ENCODE measurements at regions of chr4 and their contacts with region 1.

Region 1: DNA sequence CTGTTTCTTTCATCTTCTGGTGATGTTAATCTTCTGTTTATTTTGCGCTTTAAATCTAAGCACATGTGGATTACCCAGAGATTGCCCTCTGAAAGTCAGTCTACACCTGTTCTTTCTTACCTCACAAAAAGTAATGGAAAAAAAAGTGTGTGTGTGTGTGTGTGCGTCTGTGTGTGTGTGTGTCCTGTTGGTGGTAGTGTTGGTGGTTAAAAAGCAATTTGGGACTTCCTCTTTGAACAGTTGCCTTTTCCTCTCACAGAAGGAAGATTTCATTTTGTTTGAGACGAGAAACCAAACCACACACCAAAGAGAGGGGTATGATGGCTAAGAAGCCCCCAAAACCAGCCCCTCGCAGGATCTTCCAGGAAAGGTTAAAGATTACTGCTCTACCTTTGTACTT is at the start of gene STAP1:
- DNase-seq: no peak
- ATAC-seq: peak; percentile 76
- H3K4me3 ChIP-seq: peak within 1 kb of the TSS; percentile 55
- H3K27ac ChIP-seq: peak within 1 kb of the TSS; percentile 38; the same call in 1 of the 2 replicates
- H3K4me1 ChIP-seq: no peaks in the 10 kb centered on the region; the same call in 1 of the 2 replicates
- H3K27me3 ChIP-seq: no peaks in the 10 kb centered on the region
- CTCF ChIP-seq: peak in 1 of 3 experiments; percentile 34; a peak in 2 of 6 replicates
- EP300 ChIP-seq: peak; percentile 24 to 71; a peak in 2 of 4 replicates
- POLR2A ChIP-seq: no peak
- RAD21 ChIP-seq: peak; percentile 38; the same call in 1 of the 2 replicates
- polyA plus RNA-seq, gene STAP1: 16.3 to 19.4 TPM

Region 2: GRCh38 chr4:67499799-67500198 is 58.7 kb before region 1 on chr4:
- CTCF ChIA-PET with region 1: no interaction called
- POLR2A ChIA-PET with region 1: no interaction called
- RAD21 ChIA-PET with region 1: no interaction called
- SMC1A ChIA-PET with region 1: no interaction called
- in situ Hi-C with region 1: no loop called
- intact Hi-C with region 1: no loop called
- DNase-seq: no peak
- ATAC-seq: no peak
- H3K4me3 ChIP-seq: no peak overlapping the region
- H3K27ac ChIP-seq: no peak overlapping the region
- H3K4me1 ChIP-seq: no peaks in the 10 kb centered on the region
- H3K27me3 ChIP-seq: no peaks in the 10 kb centered on the region
- CTCF ChIP-seq: no peak
- EP300 ChIP-seq: no peak
- POLR2A ChIP-seq: no peak
- RAD21 ChIP-seq: no peak

Region 3: GRCh38 chr4:67512501-67512900 is 46.0 kb before region 1 on chr4:
- CTCF ChIA-PET with region 1: no interaction called
- POLR2A ChIA-PET with region 1: no interaction called
- RAD21 ChIA-PET with region 1: no interaction called
- SMC1A ChIA-PET with region 1: no interaction called
- in situ Hi-C with region 1: no loop called
- intact Hi-C with region 1: no loop called
- DNase-seq: no peak
- ATAC-seq: no peak
- H3K4me3 ChIP-seq: no peak overlapping the region
- H3K27ac ChIP-seq: no peak overlapping the region
- H3K4me1 ChIP-seq: no peaks in the 10 kb centered on the region
- H3K27me3 ChIP-seq: no peaks in the 10 kb centered on the region
- CTCF ChIP-seq: no peak
- EP300 ChIP-seq: no peak
- POLR2A ChIP-seq: no peak
- RAD21 ChIP-seq: no peak

Region 4: DNA sequence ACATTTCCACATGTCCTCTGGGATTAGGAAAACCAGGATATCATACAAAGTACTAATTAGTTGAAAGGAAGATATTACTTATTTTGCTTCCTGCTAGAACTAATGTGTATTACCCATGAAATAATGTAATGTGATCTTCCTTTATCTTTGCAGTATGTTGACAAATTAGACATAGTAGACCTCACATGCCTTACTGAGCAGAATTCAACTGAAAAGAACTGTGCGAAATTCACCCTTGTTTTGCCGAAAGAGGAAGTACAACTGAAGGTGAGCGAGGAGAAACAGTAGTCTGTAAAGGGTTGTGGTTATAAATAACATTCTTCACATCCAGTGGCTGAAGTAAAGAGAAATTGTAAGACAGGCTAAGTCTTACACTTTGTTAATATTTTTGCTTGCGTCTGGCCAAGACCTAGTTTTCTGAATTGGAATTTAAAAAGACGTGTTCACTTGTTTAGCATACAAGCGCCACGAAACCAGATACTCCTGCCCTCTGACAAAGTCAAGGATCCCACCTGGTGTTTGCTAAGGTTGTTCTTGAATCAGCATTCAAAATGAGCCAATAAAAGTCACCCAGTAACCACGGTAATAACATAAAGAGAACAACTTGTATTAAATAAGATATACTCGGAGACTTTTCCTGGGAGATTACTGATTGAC is 16.9 kb after region 1 on chr4:
- CTCF ChIA-PET with region 1: interaction called, 10 read pairs
- POLR2A ChIA-PET with region 1: interaction called, 5 read pairs
- RAD21 ChIA-PET with region 1: interaction called, 8 read pairs
- SMC1A ChIA-PET with region 1: interaction called, 51 read pairs
- in situ Hi-C with region 1: no loop called
- intact Hi-C with region 1: no loop called
- DNase-seq: peak; percentile 85
- ATAC-seq: peak; percentile 91
- H3K4me3 ChIP-seq: peak overlapping the region; percentile 56
- H3K27ac ChIP-seq: peak overlapping the region; percentile 67
- H3K4me1 ChIP-seq: peaks cover 19% of the 10 kb centered on the region
- H3K27me3 ChIP-seq: no peaks in the 10 kb centered on the region
- CTCF ChIP-seq: no peak
- EP300 ChIP-seq: peak in 1 of 2 experiments; percentile 77; a peak in 2 of 4 replicates
- POLR2A ChIP-seq: no peak
- RAD21 ChIP-seq: no peak

Measured in GM12878 (cell line).